GM12878 (cell line): ENCODE measurements at regions of chr13 and their contacts with region 1.

Region 1: GRCh38 chr13:41263261-41264027 is at the start of gene MTRF1:
- DNase-seq: peak; percentile 61
- ATAC-seq: peak; percentile 97
- H3K4me3 ChIP-seq: peak within 1 kb of the TSS; percentile 94
- H3K27ac ChIP-seq: peak within 1 kb of the TSS; percentile 80
- H3K4me1 ChIP-seq: no peaks in the 10 kb centered on the region
- H3K27me3 ChIP-seq: no peaks in the 10 kb centered on the region
- CTCF ChIP-seq: no peak
- EP300 ChIP-seq: no peak
- POLR2A ChIP-seq: peak; percentile 75
- RAD21 ChIP-seq: no peak
- polyA plus RNA-seq, gene MTRF1: 14.1 to 18.1 TPM

Region 2: DNA sequence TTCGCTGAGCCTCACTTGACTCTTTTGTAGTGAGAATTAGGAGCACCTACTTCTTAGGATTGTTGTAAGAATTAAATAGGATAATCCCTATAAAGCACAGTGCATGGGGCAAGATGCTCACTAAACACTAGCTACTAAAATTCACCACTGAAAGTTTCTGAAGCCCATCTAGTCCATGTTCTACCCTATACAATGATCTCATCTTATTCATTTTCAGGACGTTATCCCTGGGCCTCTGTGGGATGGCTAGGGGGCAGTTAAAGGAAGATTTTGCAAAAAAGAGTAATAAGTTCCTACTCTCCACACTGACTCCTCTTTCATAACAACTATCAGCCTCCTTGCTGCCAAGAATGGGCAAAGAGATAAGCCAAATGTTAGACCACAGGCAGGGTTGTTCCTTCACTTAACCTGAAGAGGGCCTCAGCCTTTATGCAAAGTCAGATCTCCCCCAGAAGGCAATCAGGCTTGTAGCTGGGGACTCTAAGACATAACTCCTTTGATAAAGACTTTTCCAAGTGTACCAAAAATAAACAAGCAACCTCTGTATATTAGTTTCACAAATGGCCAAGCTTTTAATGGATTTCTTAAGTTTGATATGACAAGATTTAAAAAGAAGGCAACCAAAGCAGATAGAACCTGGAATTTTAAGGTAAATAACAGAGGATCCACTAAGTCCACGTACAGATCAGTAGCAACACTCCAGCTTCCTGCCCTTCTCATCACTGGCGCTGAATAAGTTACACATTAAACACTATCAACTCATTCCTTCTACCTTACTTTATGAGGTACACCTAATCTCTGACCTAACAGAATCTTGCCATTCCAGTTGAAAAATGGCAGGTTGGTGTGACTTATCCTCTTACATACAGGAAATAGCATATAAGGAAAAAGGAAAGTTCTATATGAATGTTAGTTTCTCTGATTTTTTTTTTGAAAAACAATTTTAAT is 288.7 kb before region 1 on chr13:
- CTCF ChIA-PET with region 1: no interaction called
- POLR2A ChIA-PET with region 1: no interaction called
- RAD21 ChIA-PET with region 1: no interaction called
- SMC1A ChIA-PET with region 1: no interaction called
- in situ Hi-C with region 1: no loop called
- intact Hi-C with region 1: no loop called
- DNase-seq: no peak
- ATAC-seq: peak; percentile 78
- H3K4me3 ChIP-seq: peak overlapping the region; percentile 34
- H3K27ac ChIP-seq: peak overlapping the region; percentile 56
- H3K4me1 ChIP-seq: peaks cover 38% of the 10 kb centered on the region
- H3K27me3 ChIP-seq: no peaks in the 10 kb centered on the region
- CTCF ChIP-seq: peak; percentile 69 to 80 (median 70)
- EP300 ChIP-seq: no peak
- POLR2A ChIP-seq: 0 out of 2 replicates have a peak, but pooled peaks have one; percentile 16
- RAD21 ChIP-seq: peak; percentile 77

Region 3: GRCh38 chr13:41310963-41311606 is 47.6 kb after region 1 on chr13 and contains the start of gene NAA16:
- CTCF ChIA-PET with region 1: no interaction called
- POLR2A ChIA-PET with region 1: no interaction called
- RAD21 ChIA-PET with region 1: interaction called, 4 read pairs
- SMC1A ChIA-PET with region 1: interaction called, 4 read pairs
- in situ Hi-C with region 1: no loop called
- intact Hi-C with region 1: loop called (anchors 2 kb)
- DNase-seq: peak; percentile 76
- ATAC-seq: peak; percentile 84
- H3K4me3 ChIP-seq: peak within 1 kb of the TSS; percentile 99
- H3K27ac ChIP-seq: peak within 1 kb of the TSS; percentile 83
- H3K4me1 ChIP-seq: peaks cover 6% of the 10 kb centered on the region; the same call in 1 of the 2 replicates
- H3K27me3 ChIP-seq: no peaks in the 10 kb centered on the region
- CTCF ChIP-seq: no peak
- EP300 ChIP-seq: no peak
- POLR2A ChIP-seq: peak; percentile 85
- RAD21 ChIP-seq: no peak
- polyA plus RNA-seq, gene NAA16: 5.4 to 6.3 TPM

Region 4: GRCh38 chr13:41428155-41428554 is 164.7 kb after region 1 on chr13:
- CTCF ChIA-PET with region 1: no interaction called
- POLR2A ChIA-PET with region 1: no interaction called
- RAD21 ChIA-PET with region 1: no interaction called
- SMC1A ChIA-PET with region 1: no interaction called
- in situ Hi-C with region 1: no loop called
- intact Hi-C with region 1: no loop called
- DNase-seq: no peak
- ATAC-seq: peak; percentile 48
- H3K4me3 ChIP-seq: no peak overlapping the region
- H3K27ac ChIP-seq: no peak overlapping the region
- H3K4me1 ChIP-seq: no peaks in the 10 kb centered on the region
- H3K27me3 ChIP-seq: no peaks in the 10 kb centered on the region
- CTCF ChIP-seq: peak in 2 of 3 experiments; percentile 28 to 36; a peak in 3 of 6 replicates
- EP300 ChIP-seq: no peak
- POLR2A ChIP-seq: no peak
- RAD21 ChIP-seq: peak; percentile 68